ENCODE measurements at regions of chr6 and their contacts with region 1.

Region 1: GRCh38 chr6:34425498-34426410 is at the start of gene RPS10:
- DNase-seq: peak; percentile 97

Region 2: GRCh38 chr6:34015586-34015985 is 410.2 kb before region 1 on chr6:
- CTCF ChIA-PET with region 1: no interaction called
- POLR2A ChIA-PET with region 1: no interaction called
- DNase-seq: no peak

Region 3: DNA sequence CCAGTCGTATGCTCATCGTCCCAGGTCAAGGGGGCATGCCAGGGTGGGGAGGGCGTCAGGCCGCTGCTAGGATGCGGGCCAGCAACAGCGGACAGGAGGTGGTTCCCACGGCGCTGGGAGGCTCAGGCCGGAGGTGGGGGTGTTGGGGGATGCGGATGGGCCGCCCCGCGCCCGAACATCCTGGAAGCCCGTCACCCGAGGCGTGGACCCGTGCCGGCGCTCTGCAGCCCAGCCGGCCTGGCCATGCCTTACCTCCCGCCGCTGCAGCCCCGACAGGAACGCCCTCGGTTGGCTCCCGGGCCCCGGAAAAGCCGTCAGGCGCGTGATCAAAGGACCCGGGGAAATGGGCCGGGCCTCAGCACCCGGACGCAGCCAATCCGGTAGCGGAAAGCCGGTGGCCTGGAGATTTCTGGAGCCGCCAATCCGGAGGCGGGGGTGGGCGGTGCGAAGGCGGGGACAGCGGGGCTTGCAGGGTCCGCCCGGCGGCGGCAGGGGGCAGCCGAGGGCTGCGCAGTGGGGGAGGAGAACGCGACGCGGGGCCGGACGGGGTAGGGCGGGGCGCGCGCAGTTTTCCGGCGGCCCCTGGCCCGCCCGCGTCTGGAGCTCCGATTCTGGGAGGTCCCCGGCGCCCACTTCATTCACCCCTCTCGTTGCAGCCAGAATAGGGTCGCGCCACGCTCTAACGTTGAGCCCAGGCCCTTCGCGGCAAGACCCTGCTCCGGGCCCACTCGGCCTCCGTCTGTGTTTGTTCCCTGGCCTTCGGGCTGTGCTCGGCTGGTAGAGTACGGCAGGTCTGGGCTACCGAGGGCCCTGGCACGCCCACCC is 176.8 kb before region 1 on chr6 and contains the start of gene SMIM29:
- CTCF ChIA-PET with region 1: no interaction called
- POLR2A ChIA-PET with region 1: interaction called, 16 read pairs
- DNase-seq: peak; percentile 95

Region 4: DNA sequence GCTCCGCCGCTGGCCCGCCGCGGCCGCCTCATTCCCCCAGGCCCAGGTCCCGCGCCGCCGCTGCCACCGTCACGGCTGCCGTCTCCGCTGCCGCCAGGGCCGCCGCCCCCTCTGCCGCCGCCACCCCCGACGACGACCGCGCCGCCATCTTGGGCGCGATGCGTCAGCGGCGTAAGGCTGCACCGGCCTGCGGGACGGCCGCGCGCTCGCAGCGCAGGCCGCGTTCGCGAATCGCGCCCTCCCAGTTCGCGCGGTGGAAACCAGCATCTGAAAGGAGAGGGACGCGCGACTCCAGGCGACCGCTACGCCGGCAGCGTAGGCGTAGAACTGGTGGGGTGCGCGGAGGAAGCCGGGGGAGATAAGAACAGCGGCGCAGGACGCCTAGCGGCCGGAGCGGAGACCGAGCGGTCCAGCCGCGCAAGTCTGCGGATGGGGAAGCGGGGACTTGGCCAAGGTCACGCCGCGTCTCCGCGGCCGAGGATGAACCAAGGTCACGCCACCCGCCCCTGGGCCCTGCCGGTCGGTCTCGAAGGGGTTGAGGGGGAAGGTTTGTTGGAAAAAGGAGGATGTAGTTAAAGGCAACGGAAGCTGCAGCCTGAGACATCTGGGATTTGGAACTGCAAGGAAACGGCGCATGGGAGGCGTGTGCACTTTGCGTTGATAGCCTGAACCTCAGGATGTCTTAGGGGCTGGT is 33.1 kb before region 1 on chr6 and contains the start of gene NUDT3:
- CTCF ChIA-PET with region 1: no interaction called
- POLR2A ChIA-PET with region 1: no interaction called
- DNase-seq: peak; percentile 93

Region 5: DNA sequence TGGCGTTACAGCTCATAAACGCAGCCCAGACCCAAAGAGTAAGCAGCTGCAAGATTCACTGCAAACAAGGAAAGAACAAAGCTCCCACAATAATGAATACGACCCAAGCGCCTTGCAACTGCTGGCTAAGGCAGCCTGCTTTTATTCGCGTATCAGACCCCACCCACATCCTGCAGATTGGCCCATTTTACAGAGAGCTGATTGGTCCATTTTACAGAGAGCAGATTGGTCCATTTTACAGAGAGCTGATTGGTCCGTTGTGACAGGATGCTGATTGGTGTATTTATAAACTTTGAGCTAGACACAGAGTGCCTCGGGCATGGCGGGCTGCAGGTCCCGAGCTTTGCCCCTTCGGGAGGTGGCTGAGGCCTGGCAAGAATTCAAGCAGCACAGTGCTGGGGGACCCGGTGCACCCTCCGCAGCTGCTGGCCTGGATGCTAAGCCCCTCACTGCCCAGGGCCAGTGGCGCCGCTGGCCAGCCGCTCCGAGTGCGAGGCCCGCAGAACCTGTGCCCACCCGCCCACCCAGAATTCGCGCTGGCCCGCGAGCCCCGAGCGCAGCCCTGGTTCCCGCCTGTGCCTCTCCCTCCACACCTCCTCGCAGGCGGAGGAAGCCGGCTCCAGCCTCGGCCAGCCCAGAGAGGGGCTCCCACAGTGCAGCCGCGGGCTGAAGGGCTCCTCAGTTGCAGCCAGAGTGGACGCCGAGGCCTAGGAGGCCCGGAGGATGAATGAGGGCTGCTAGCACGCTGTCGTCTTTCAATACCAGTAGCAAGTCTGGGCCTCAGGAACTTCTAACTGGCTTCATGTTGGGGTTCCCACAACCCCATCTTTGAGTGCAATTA is 11.3 kb after region 1 on chr6:
- CTCF ChIA-PET with region 1: interaction called, 4 read pairs
- POLR2A ChIA-PET with region 1: interaction called, 11 read pairs
- DNase-seq: no peak